PC-9 (cell line): ENCODE measurements at regions of chr6 and their contacts with region 1.

Region 1: DNA sequence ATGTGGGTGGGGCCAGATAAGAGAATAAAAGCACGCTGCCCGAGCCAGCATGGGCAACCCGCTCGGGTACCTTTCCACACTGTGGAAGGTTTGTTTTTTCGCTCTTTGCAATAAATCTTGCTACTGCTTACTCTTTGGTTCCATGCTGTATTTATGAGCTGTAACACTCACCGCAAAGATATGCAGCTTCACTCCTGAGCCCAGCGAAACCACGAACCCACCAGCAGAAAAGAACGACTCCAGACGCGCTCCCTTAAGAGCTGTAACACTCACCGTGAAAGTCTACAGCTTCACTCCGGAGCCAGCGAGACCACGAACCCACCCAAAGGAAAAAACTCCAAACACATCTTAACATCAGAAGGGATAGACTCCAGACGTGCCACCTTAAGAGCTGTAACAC is 76.7 kb downstream of the TFAP2A start:
- DNase-seq: no peak
- H3K4me3 ChIP-seq: no peak overlapping the region
- H3K27ac ChIP-seq: no peak overlapping the region
- H3K4me1 ChIP-seq: no peaks in the 10 kb centered on the region
- H3K27me3 ChIP-seq: no peaks in the 10 kb centered on the region
- CTCF ChIP-seq: no peak

Region 2: GRCh38 chr6:9204171-9204570 is 1134.0 kb before region 1 on chr6:
- CTCF ChIA-PET with region 1: no interaction called
- POLR2A ChIA-PET with region 1: interaction called, 13 read pairs
- intact Hi-C with region 1: no loop called
- DNase-seq: peak in 1 of 2 experiments; percentile 55
- H3K4me3 ChIP-seq: no peak overlapping the region
- H3K27ac ChIP-seq: no peak overlapping the region
- H3K4me1 ChIP-seq: no peaks in the 10 kb centered on the region
- H3K27me3 ChIP-seq: no peaks in the 10 kb centered on the region
- CTCF ChIP-seq: no peak

Region 3: DNA sequence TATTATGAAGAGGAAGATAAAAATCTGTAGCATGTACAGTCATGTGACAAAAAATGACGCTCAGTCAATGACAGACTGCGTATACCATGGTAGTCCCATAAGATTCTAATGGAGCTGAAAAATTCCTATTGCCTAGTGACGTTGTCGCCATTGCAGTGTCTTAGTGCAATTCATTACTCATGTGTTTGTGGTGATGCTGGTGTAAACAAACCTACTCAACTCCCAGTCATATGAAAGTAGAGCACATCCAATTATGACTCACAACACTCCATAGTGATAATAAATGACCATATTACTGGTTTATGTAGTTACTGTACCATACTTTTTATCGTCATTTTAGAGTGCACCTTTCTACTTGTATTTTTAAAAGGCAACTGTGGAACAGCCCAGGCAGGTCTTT is 31.7 kb after region 1 on chr6:
- CTCF ChIA-PET with region 1: no interaction called
- POLR2A ChIA-PET with region 1: no interaction called
- intact Hi-C with region 1: no loop called
- DNase-seq: peak in 1 of 2 experiments; percentile 66
- H3K4me3 ChIP-seq: no peak overlapping the region
- H3K27ac ChIP-seq: no peak overlapping the region
- H3K4me1 ChIP-seq: peaks cover 9% of the 10 kb centered on the region
- H3K27me3 ChIP-seq: no peaks in the 10 kb centered on the region
- CTCF ChIP-seq: no peak